Psoas muscle (tissue), 8 donors: ENCODE measurements at regions of chr3 and their contacts with region 1.

Region 1: GRCh38 chr3:115071611-115072010 is 75.5 kb downstream of the ZBTB20 start:
- DNase-seq: no peak
- ATAC-seq: peak; percentile 44 to 73 (median 59)
- H3K4me3 ChIP-seq: peak overlapping the region; percentile 6
- H3K27ac ChIP-seq: peak overlapping the region; percentile 59
- H3K4me1 ChIP-seq: peaks cover 38% of the 10 kb centered on the region
- H3K27me3 ChIP-seq: no peaks in the 10 kb centered on the region
- CTCF ChIP-seq: no peak

Region 2: DNA sequence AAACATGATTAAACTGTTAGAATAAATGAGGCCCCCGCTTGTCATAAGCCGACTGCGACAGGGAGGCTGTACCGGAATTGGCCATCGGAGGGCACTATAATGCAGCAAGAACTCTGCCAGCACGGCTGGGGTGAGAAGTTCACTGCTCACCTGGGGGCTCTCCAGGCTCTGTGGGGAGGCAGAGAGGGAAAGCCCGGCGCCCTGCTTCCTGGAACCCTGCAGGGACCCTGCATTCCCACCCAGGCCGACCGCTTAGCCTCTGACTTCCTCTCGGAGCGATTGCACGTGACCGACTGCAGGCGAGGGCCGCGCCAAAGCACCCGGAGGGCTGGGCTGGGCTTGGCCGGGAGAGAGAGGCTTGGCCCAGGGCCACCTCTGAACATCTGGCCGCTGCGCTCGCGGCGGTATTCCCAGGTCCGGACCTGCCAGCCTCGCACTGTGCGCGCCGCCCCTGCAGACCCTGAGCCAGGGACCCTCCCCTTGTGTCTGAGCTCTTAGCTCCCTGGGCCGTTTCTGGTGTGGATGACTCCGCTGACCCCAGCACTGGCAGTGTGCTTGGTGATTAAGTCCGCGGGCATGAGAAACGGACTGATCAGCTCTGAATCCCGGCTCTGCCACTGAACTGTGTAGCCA is 919.0 kb before region 1 on chr3:
- intact Hi-C with region 1: loop called in 1 of 2 experiments (anchors 10 kb)
- DNase-seq: peak; percentile 68 to 86
- ATAC-seq: peak; percentile 85 to 95 (median 88)
- H3K4me3 ChIP-seq: peak overlapping the region; percentile 69
- H3K27ac ChIP-seq: no peak overlapping the region
- H3K4me1 ChIP-seq: peaks cover 7% of the 10 kb centered on the region
- H3K27me3 ChIP-seq: no peaks in the 10 kb centered on the region
- CTCF ChIP-seq: peak; percentile 90